ENCODE measurements at regions of chr9 and their contacts with region 1.

Region 1: DNA sequence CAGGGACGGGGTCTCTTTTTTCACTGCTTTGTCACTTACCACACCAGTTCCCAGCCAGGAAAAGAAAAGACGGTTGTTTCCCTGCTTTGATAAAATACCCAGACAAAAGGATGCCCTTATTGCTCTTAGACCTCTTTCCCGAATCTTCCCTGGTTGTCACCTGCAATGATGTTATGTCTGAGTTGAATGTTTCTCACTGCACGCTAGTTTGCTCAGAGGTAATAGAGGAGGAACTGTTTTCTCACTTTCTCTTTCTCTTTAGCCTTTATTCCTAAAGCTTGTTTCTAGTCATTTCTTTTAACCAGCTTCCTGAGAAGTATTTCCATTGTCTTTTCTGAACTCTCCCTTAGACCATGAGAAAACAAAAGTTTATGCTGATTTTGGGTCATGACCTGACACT is 32.9 kb downstream of the ACER2 start:
- DNase-seq: no peak
- H3K4me3 Mint-ChIP-seq: peak overlapping the region; percentile 53
- H3K27ac Mint-ChIP-seq: peak overlapping the region; percentile 15
- H3K4me1 Mint-ChIP-seq: peaks cover 15% of the 10 kb centered on the region
- H3K27me3 Mint-ChIP-seq: no peaks in the 10 kb centered on the region

Region 2: DNA sequence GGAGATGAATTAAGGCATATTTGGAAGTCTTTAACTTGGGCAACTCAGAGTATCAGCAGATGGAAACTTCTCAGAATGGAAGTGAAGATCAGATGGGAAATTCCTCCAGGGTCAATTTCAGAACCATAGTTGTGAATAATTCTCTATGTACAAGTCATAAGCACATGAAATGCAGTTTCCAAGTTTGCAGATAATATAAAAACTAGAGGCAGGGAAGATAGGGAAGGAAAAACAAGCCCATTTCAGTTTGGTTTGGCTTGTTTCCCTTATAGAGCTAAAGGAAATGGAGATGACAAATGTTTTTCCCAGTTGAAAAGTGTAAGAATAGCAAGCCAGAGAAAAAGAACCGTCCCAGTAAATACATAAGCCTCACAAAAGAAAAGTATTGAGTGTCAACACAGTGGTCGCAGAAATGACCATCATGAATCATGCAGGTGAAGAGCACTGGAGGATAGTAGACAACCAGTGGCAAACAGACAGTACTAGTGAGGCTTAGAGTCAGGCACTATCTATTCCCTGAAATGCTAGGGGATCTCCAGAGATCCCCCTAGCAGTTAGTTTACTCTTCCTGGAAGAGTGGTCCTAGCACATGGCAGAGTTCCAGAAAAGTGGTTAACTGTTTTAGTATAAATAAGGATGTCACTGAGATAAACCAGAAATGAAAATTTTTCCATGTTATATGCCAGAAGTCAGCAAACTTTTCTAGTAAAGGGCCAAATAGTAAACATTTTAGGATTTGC is 654.6 kb before region 1 on chr9:
- CTCF ChIA-PET with region 1: no interaction called
- POLR2A ChIA-PET with region 1: no interaction called
- intact Hi-C with region 1: no loop called
- DNase-seq: no peak
- H3K4me3 Mint-ChIP-seq: no peak overlapping the region
- H3K27ac Mint-ChIP-seq: no peak overlapping the region
- H3K4me1 Mint-ChIP-seq: no peaks in the 10 kb centered on the region
- H3K27me3 Mint-ChIP-seq: peaks cover 5% of the 10 kb centered on the region

Region 3: DNA sequence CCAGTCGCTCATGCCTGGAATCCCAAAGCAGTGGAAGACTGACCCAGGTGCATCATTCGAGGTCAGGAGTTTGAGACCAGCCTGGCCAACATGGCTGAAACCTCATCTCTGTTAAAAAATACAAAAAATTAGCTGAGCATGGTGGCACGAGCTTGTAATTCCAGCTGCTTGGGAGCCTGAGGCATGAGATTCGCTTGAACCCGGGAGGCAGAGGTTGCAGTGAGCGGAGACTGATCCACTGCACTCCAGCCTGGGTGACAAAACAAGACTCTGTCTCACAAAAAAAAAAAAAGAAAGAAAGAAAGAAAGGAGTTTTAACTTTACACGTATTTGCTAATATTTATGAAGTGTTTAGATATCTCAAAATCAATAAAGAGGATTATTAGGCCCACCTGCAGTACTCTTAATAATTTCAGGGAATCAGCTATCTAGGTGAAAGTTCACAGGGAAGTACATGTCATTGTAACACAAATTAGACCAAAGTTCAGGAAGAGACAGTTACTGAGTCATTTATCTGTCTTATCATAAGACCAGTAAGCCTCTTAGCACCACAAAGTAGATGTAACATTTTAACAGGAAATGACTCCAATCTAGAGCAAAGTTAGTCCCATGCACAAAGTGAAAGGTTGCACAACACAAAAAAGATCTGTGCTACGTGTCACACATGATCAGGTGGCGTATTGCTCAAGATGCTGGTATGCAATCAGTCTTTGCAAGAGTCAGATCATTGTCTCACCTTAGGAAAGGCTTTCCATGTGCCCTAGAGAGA is 280.3 kb before region 1 on chr9:
- CTCF ChIA-PET with region 1: no interaction called
- POLR2A ChIA-PET with region 1: no interaction called
- intact Hi-C with region 1: loop called (anchors 5 kb)
- DNase-seq: peak; percentile 73
- H3K4me3 Mint-ChIP-seq: peak overlapping the region; percentile 14
- H3K27ac Mint-ChIP-seq: peak overlapping the region; percentile 76
- H3K4me1 Mint-ChIP-seq: peaks cover 19% of the 10 kb centered on the region
- H3K27me3 Mint-ChIP-seq: no peaks in the 10 kb centered on the region

Region 4: GRCh38 chr9:19298436-19299000 is 143.2 kb before region 1 on chr9:
- CTCF ChIA-PET with region 1: no interaction called
- POLR2A ChIA-PET with region 1: no interaction called
- intact Hi-C with region 1: no loop called
- DNase-seq: no peak
- H3K4me3 Mint-ChIP-seq: no peak overlapping the region
- H3K27ac Mint-ChIP-seq: no peak overlapping the region
- H3K4me1 Mint-ChIP-seq: peaks cover 5% of the 10 kb centered on the region
- H3K27me3 Mint-ChIP-seq: no peaks in the 10 kb centered on the region

Region 5: DNA sequence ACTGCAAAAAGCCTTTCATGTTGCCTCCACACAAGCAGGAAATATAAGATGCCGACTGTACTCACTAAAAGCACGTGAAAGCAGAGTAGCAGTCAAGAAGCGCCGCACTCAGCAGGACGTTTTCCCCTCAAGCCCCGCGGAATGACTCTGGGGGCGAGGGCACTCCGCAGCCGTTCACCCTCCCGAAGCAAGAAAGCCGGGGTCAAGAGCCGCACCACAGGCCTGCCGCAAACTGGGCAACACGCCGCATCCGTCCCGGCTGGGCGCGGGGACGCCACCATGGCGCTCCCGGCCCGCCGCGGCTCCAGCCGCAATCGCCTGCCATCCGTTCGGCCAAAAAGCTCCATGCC is 62.1 kb before region 1 on chr9:
- CTCF ChIA-PET with region 1: no interaction called
- POLR2A ChIA-PET with region 1: no interaction called
- intact Hi-C with region 1: loop called (anchors 5 kb)
- DNase-seq: no peak
- H3K4me3 Mint-ChIP-seq: peak overlapping the region; percentile 100
- H3K27ac Mint-ChIP-seq: peak overlapping the region; percentile 100
- H3K4me1 Mint-ChIP-seq: peaks cover 50% of the 10 kb centered on the region
- H3K27me3 Mint-ChIP-seq: peaks cover 3% of the 10 kb centered on the region

Region 6: GRCh38 chr9:19408693-19409400 is 32.9 kb before region 1 on chr9 and contains the start of gene ACER2:
- CTCF ChIA-PET with region 1: no interaction called
- POLR2A ChIA-PET with region 1: no interaction called
- intact Hi-C with region 1: loop called (anchors 2 kb)
- DNase-seq: peak; percentile 96
- H3K4me3 Mint-ChIP-seq: peak within 1 kb of the TSS; percentile 95
- H3K27ac Mint-ChIP-seq: peak within 1 kb of the TSS; percentile 71
- H3K4me1 Mint-ChIP-seq: peaks cover 12% of the 10 kb centered on the region
- H3K27me3 Mint-ChIP-seq: no peaks in the 10 kb centered on the region
- total RNA-seq, gene ACER2: 1.8 TPM

Region 7: DNA sequence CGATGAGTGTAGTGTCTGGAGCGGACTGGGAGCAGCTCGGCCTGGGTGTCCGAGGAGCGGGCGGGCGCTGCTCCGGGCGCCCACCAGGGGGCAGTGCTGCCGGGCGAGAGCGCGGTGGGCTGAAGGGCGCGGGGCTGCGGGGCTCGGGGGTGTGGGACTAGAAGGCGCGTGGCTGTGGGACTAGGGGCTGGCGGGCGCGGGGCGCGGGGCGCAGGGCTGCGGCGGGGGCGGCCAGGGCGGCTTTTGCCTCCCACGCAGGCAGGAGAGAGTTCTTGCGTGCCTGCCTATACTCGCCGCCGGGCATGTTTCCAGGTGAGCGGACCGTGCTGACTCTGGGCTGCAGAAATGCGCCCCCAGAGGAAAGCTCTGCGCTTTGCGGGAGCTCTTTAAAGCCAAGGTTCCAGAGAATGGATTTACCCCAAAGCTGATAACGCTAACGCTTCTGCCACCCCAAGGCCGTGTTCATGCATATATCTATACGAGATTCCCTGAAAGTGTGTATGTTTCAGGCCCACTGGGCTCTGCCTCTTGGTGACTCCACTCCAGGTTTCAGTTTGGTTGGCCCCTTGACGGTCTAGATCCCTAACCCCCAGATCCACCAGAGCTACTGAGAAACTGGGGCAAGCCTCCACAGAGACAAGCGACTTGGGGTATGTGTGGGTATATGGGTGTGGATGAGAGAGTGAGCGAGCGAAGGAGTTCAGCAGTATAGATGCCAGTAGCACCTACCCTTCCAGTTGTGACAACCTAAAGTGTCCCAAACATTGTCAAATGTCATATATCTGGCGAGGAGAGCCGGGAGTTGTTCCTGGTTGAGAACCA is 23.2 kb after region 1 on chr9:
- CTCF ChIA-PET with region 1: interaction called, 32 read pairs
- POLR2A ChIA-PET with region 1: no interaction called
- intact Hi-C with region 1: no loop called
- DNase-seq: peak; percentile 73
- H3K4me3 Mint-ChIP-seq: peak overlapping the region; percentile 72
- H3K27ac Mint-ChIP-seq: no peak overlapping the region
- H3K4me1 Mint-ChIP-seq: peaks cover 7% of the 10 kb centered on the region
- H3K27me3 Mint-ChIP-seq: no peaks in the 10 kb centered on the region

Region 8: DNA sequence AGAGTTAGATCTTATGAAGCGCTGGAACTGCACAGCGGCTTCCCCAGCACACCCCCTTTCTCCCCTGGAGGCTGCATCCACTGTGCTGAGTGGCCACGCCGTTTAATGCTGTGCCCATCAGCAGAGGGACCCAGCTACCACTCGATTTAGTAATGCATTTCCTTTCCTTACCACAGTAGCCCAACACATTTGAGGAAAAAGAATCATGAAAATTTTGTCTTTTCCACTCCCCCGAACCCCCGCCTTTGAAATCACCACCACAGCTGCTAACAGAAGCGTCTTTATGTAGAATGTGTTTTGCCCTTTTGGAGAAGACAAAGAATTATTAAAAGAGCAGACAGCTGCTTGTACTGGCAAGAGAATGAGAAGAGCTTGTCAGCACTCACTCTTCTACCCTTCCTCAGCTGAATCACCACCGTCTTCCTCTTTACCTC is 40.3 kb after region 1 on chr9:
- CTCF ChIA-PET with region 1: no interaction called
- POLR2A ChIA-PET with region 1: no interaction called
- intact Hi-C with region 1: no loop called
- DNase-seq: no peak
- H3K4me3 Mint-ChIP-seq: no peak overlapping the region
- H3K27ac Mint-ChIP-seq: no peak overlapping the region
- H3K4me1 Mint-ChIP-seq: no peaks in the 10 kb centered on the region
- H3K27me3 Mint-ChIP-seq: no peaks in the 10 kb centered on the region